Gastrocnemius medialis (tissue), 4 donors: ENCODE measurements at regions of chr9 and their contacts with region 1.

Region 1: DNA sequence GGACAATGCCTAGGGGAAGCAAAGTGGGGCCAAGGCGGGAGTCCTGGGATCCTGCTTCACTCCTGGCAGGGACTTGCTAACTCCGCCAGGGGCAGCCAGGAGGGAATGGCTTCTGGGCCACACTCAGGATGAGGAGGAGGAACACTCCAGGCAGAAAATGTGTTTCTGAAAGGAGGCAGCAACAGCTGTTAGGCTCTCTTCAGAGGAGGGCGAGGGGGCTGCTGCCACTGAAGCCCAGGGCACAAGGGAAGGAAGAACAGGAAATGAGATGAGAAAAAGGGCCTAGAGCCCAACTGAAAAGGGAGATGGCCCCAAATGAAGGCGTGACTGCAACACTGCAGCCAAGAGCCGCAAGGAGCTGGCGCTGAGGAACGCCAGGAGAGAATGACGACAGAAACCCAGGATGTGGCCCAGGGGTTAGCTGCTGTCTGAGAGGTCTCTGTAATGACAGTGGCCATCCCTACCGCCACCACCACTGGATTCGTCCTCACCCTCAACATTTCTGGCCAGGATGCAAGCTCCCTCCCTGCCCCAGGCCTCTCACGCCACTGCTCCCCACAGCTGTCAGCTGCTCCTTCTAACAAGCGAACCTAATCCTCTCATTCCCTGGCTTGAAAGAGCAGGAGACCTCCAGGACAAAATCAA is 15.8 kb downstream of the PSMB7 start:
- DNase-seq: peak; percentile 43 to 78
- ATAC-seq: peak; percentile 93 to 95
- H3K4me3 ChIP-seq: no peak overlapping the region
- H3K27ac ChIP-seq: peak overlapping the region; percentile 69 to 80 (median 76)
- H3K4me1 ChIP-seq: peaks cover 41 to 42% of the 10 kb centered on the region in 2 donors
- H3K27me3 ChIP-seq: no peaks in the 10 kb centered on the region
- CTCF ChIP-seq: peak in 1 of 5 experiments; percentile 39
- POLR2A ChIP-seq: no peak

Region 2: GRCh38 chr9:123742009-123742767 is 657.3 kb before region 1 on chr9:
- in situ Hi-C with region 1: no loop called
- intact Hi-C with region 1: no loop called
- DNase-seq: peak in 1 of 2 donors; percentile 12
- ATAC-seq: peak; percentile 33 to 36
- H3K4me3 ChIP-seq: no peak overlapping the region
- H3K27ac ChIP-seq: peak overlapping the region in 2 of 4 donors; percentile 15 to 36
- H3K4me1 ChIP-seq: peaks cover 8 to 19% of the 10 kb centered on the region in 2 donors
- H3K27me3 ChIP-seq: no peaks in the 10 kb centered on the region
- CTCF ChIP-seq: no peak
- POLR2A ChIP-seq: no peak

Region 3: GRCh38 chr9:124330011-124330697 is 69.3 kb before region 1 on chr9:
- in situ Hi-C with region 1: no loop called
- intact Hi-C with region 1: loop called (anchors 5 kb)
- DNase-seq: peak; percentile 46 to 79
- ATAC-seq: peak; percentile 73 to 86
- H3K4me3 ChIP-seq: peak overlapping the region in 3 of 4 donors; percentile 7 to 31 (median 14)
- H3K27ac ChIP-seq: peak overlapping the region; percentile 75 to 92 (median 76)
- H3K4me1 ChIP-seq: peaks cover 4 to 6% of the 10 kb centered on the region in 2 donors
- H3K27me3 ChIP-seq: no peaks in the 10 kb centered on the region
- CTCF ChIP-seq: no peak
- POLR2A ChIP-seq: peak in 1 of 2 donors; percentile 9

Region 4: DNA sequence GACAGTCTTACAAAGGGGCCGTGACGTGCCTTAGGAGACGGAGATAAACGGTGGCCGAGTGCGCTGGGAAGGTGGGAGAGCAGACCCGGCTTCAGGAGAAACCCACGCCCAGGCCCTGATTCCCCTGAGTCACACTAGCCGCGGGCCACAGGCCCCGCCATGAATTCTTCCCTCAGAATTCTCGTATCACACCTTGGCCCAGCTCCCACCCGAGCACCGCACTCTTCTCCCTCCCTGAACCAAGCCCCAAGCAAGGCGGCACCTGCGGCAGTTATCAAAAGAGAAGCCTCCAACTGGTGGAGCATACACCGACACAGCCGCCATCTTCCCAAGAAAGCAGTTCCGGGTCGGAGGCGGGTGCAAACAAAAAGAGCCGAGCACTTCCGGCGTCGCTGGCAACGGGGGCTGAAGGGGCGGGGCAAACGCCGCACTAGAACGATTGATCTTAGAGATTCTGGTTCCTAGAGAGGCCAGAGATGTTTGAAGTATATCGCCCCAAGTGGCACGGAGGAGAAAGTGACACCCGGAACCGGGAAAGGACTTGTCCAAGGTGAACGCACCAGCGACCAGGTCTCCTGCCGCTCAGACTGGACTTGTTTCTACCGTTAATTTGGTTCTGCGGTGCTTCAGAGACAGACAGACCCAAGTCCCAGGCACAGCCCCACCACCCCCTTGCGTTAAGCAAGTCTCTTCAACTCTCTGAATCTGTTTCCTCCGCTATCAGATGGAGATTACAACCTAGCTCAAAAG is 15.8 kb after region 1 on chr9 and contains the start of gene PSMB7:
- in situ Hi-C with region 1: no loop called
- intact Hi-C with region 1: loop called (anchors 2 kb)
- DNase-seq: peak; percentile 90 to 95
- ATAC-seq: peak; percentile 96 to 97
- H3K4me3 ChIP-seq: peak within 1 kb of the TSS; percentile 85 to 94 (median 88)
- H3K27ac ChIP-seq: peak within 1 kb of the TSS; percentile 86 to 90 (median 88)
- H3K4me1 ChIP-seq: peaks cover 16 to 18% of the 10 kb centered on the region in 2 donors
- H3K27me3 ChIP-seq: no peaks in the 10 kb centered on the region
- CTCF ChIP-seq: peak; percentile 72 to 93 (median 84)
- POLR2A ChIP-seq: peak; percentile 83 to 94
- total RNA-seq, gene PSMB7: 265 to 438 (median 354) TPM